Stomach (tissue), 19 donors: ENCODE measurements at regions of chr4 and their contacts with region 1.

Region 1: GRCh38 chr4:168694648-168695047 is 197.8 kb downstream of the PALLD start:
- DNase-seq: peak in 1 of 2 donors; percentile 51
- H3K4me3 ChIP-seq: no peak overlapping the region
- H3K27ac ChIP-seq: peak overlapping the region in 1 of 5 donors; percentile 18
- H3K4me1 ChIP-seq: no peaks in the 10 kb centered on the region
- H3K27me3 ChIP-seq: no peaks in the 10 kb centered on the region
- CTCF ChIP-seq: no peak
- EP300 ChIP-seq: no peak
- POLR2A ChIP-seq: no peak

Region 2: DNA sequence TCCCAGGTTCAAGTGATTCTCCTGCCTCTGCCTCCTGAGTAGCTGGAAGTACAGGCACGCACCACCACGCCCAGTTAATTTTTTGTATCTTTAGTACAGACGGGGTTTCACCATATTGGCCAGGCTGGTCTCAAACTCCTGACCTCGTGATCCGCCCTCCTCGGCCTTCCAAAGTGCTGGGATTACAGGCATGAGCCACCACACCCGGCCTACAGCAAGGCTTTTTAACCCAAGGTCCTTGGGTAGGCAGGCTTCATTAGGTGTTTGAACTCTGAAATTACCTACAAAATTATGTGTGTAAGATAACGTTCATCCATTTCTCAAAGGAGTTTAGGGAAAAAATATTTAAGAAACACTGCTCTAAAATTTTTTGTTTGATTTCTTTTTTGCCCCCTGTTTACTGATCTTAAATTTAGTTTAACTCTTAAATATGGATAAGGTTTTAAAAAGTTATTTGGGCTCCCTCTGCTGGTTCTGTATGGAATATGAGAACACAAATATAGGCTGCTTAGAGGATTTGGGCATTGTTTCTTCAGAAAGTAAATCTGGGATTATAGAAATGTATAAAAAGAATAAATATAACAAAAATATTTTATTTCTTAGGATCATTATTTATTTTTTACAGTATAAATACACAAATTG is 222.6 kb after region 1 on chr4:
- intact Hi-C with region 1: loop called (anchors 10 kb)
- DNase-seq: peak in 1 of 2 donors; percentile 78
- H3K4me3 ChIP-seq: no peak overlapping the region
- H3K27ac ChIP-seq: peak overlapping the region in 2 of 5 donors; percentile 14 to 70
- H3K4me1 ChIP-seq: peaks cover 0 to 13% (median 2%) of the 10 kb centered on the region in 4 donors
- H3K27me3 ChIP-seq: no peaks in the 10 kb centered on the region
- CTCF ChIP-seq: peak in 4 of 7 experiments; percentile 38 to 63 (median 44)
- EP300 ChIP-seq: no peak
- POLR2A ChIP-seq: no peak